Sciatic nerve (tissue), 2 donors: ENCODE measurements at regions of chr4 and their contacts with region 1.

Region 1: GRCh38 chr4:38319456-38320342 is 344.3 kb upstream of the KLF3 start:
- DNase-seq: peak; percentile 99
- ATAC-seq: peak; percentile 88

Region 2: DNA sequence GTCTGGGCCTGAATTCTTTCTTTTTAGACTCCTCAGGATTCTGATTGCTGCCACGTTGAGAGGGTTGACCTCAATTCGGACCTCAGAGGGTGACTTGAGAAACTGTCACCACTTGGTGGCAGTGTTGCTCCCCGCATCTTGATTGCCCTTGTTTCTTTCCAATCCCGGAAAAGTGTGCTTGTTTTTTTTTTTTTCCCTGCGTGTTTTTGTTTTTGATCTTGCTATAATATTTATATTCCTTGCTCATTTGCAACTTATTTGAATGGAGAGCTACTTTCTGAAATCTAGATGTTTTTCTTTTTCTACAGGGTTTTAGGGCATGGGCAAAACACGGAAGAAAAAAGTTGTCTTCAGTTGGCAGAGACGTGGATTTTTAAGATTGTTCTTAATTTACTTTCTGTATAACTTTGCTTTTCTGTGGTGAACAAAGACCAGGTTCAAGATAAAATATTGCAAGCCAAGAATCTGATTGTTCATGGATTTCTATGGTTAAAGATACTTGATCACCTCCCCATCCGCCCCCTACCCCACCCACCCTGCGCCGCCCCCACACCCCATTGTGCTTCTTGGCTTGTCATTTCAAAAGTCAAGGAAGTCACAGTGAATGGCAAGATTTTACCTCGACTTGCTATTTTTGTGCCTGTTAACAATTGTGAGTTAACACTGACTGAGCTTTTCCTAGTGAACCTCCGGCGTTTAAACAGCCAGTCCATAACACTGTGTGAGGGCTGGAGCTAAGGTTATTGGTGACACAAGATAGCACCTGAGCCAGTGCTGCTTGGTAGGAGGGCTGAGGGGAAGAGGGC is 257.4 kb before region 1 on chr4:
- intact Hi-C with region 1: loop called (anchors 10 kb)
- DNase-seq: peak; percentile 90
- ATAC-seq: peak; percentile 88

Region 3: GRCh38 chr4:38663801-38664705 is 344.4 kb after region 1 on chr4 and contains the start of gene KLF3:
- intact Hi-C with region 1: loop called (anchors 5 kb)
- DNase-seq: peak; percentile 96
- ATAC-seq: peak; percentile 85
- total RNA-seq, gene KLF3: 80.8 TPM